Activated T-helper 1 cell treated with anti-CD3 and anti-CD28 coated beads, Interleukin-12 subunit alpha, Interleukin-12 subunit beta, Interleukin-2, Interleukin-4 antibody, amounts not matched to agents 30 ng/mL and 10 ng/mL and 1 ng/mL, durations not matched to agents 14 hours and 24 hours and 36 hours (primary cell): ENCODE measurements at regions of chr5 and their contacts with region 1.

Region 1: GRCh38 chr5:7878381-7878873 is 9.5 kb downstream of the MTRR start:
- DNase-seq: no peak
- H3K4me3 Mint-ChIP-seq: peak overlapping the region; percentile 17
- H3K27ac Mint-ChIP-seq: peak overlapping the region; percentile 81
- H3K4me1 Mint-ChIP-seq: peaks cover 61% of the 10 kb centered on the region
- H3K27me3 Mint-ChIP-seq: no peaks in the 10 kb centered on the region

Region 2: DNA sequence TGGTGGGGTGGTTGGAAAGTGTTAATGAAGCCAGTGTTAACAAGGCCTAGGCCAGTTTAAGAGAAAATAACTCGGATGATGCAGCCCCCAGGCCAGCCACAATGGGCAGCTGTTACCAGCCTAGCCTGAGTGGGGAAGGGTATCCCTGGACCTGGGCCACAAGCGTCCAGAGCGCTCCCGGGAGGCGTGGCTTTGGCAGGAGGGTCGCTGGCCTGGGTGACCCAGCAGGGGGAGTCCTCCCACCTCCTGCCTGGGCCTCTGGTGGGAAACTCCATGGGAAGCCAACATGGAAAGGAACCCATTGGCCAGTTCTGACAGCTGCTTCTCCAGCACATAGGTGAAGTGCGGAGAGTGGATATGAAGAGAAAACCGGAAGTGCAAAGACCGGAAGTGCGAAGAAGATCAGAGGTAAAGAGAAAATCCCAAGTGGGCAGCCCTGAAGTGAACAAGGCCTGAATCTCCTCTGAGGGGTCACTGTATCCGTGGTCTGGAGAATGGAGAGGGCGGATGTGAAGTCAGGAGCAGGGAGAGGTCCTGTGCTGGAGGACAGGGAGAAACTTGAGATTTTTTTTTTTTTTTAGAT is 403.5 kb before region 1 on chr5:
- intact Hi-C with region 1: no loop called
- DNase-seq: no peak
- H3K4me3 Mint-ChIP-seq: no peak overlapping the region
- H3K27ac Mint-ChIP-seq: no peak overlapping the region
- H3K4me1 Mint-ChIP-seq: no peaks in the 10 kb centered on the region
- H3K27me3 Mint-ChIP-seq: no peaks in the 10 kb centered on the region

Region 3: DNA sequence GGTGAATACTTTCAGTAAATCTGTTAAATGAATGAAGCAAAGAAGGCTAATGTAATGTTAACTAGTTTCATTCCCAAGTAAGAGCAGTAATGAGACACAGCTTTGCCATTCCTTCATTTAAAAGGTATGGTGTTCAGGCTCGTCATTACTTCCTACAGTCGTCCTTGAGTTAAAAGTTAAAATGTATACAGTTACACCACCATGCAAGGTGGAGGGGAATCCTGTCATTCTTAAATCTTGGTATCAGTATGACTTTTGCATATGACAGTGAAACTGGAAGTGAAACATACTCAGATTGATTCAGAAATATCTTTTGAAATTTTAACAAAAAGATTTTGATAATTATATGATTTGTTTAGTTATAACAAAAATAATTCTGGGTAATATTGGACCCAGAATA is 16.4 kb after region 1 on chr5:
- intact Hi-C with region 1: loop called (anchors 1 kb)
- DNase-seq: no peak
- H3K4me3 Mint-ChIP-seq: no peak overlapping the region
- H3K27ac Mint-ChIP-seq: no peak overlapping the region
- H3K4me1 Mint-ChIP-seq: peaks cover 22% of the 10 kb centered on the region
- H3K27me3 Mint-ChIP-seq: no peaks in the 10 kb centered on the region

Region 4: GRCh38 chr5:7904170-7904569 is 25.7 kb after region 1 on chr5:
- intact Hi-C with region 1: loop called (anchors 1 kb)
- DNase-seq: no peak
- H3K4me3 Mint-ChIP-seq: peak overlapping the region; percentile 4
- H3K27ac Mint-ChIP-seq: peak overlapping the region; percentile 74
- H3K4me1 Mint-ChIP-seq: peaks cover 23% of the 10 kb centered on the region
- H3K27me3 Mint-ChIP-seq: no peaks in the 10 kb centered on the region